Common myeloid progenitor, CD34-positive (primary cell): ENCODE measurements at regions of chr19 and their contacts with region 1.

Region 1: GRCh38 chr19:14405758-14406644 is 13.1 kb downstream of the DDX39A start:
- DNase-seq: peak; percentile 90 to 94 (median 94)
- H3K4me3 ChIP-seq: peak overlapping the region in 2 of 7 experiments; percentile 19 to 33
- H3K27ac ChIP-seq: peak overlapping the region in 1 of 2 experiments; percentile 34
- H3K4me1 ChIP-seq: peaks cover 0 to 7% (median 2%) of the 10 kb centered on the region in 4 experiments
- H3K27me3 ChIP-seq: no peaks in the 10 kb centered on the region

Region 2: GRCh38 chr19:14393329-14393728 is 12.7 kb before region 1 on chr19:
- CTCF ChIA-PET with region 1: interaction called, 12 read pairs
- POLR2A ChIA-PET with region 1: interaction called, 6 read pairs
- DNase-seq: no peak
- H3K4me3 ChIP-seq: no peak overlapping the region
- H3K27ac ChIP-seq: no peak overlapping the region
- H3K4me1 ChIP-seq: peaks cover 0 to 2% (median 0%) of the 10 kb centered on the region in 4 experiments
- H3K27me3 ChIP-seq: no peaks in the 10 kb centered on the region